OCI-LY7 (cell line): ENCODE measurements at regions of chr9 and their contacts with region 1.

Region 1: DNA sequence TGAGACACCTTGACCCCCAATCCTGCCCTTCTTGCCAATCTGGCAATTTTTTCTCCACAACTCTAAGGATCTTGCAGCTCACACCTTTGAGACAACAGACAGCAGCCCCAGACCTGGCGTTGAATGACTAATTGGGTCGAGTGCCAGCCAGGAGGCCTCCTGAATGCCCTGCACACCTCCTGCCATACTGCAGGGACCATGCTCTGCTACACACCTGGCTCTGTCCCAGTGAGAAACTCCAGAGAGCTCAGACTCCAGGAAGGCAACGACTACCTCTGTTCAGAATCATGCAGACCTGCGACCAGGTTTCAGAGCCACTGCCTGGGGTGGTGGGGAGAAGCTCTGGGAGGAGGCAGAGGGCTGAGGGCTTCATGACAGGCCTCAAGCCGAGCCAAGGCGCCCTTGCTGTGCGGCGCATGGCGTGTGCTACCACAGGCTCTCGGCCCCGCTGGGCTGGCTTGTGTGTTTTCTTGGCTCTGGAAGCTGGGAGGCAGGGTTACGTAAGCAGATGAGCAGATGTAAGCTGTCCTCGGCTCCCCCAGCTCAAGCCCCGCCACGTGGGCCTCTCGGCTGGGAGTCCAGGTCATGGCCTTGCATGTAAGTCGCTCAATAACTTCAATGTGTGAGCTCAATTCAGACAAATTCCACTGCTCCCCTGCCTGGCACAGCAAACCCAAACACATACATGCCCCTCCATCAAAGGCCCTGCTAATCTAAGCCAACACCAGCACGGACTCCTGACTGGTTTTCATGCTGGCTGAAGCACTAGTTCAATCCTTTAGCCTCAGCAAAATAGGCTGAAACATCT is 27.5 kb downstream of the B4GALT1 start:
- DNase-seq: no peak
- H3K4me3 ChIP-seq: no peak overlapping the region
- H3K27ac ChIP-seq: no peak overlapping the region
- H3K4me1 ChIP-seq: peaks cover 54% of the 10 kb centered on the region
- CTCF ChIP-seq: no peak

Region 2: DNA sequence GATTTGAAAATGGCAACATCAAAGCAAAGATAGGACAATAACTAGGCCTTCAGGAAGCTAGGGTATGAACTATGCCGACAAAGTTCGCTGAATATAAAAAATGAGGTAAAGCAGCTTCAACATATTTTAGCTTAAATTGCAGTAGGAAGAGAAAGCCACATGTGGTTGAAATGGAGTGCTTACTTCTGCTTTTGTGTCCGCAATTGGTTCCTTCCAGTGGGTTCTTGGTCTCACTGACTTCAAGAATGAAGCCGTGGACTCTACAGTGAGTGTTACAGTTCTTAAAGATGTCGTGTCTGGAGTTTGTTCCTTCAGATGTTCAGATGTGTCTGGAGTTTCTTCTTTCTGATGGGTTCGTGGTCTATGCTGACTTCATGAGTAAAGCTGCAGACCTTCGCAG is 233.4 kb before region 1 on chr9:
- CTCF ChIA-PET with region 1: no interaction called
- POLR2A ChIA-PET with region 1: no interaction called
- intact Hi-C with region 1: no loop called
- DNase-seq: no peak
- H3K4me3 ChIP-seq: no peak overlapping the region
- H3K27ac ChIP-seq: no peak overlapping the region
- H3K4me1 ChIP-seq: no peaks in the 10 kb centered on the region
- CTCF ChIP-seq: no peak

Region 3: GRCh38 chr9:33012328-33013069 is 127.1 kb before region 1 on chr9:
- CTCF ChIA-PET with region 1: no interaction called
- POLR2A ChIA-PET with region 1: no interaction called
- intact Hi-C with region 1: no loop called
- DNase-seq: no peak
- H3K4me3 ChIP-seq: no peak overlapping the region
- H3K27ac ChIP-seq: no peak overlapping the region
- H3K4me1 ChIP-seq: no peaks in the 10 kb centered on the region
- CTCF ChIP-seq: no peak

Region 4: GRCh38 chr9:33151007-33151557 is 11.5 kb after region 1 on chr9:
- CTCF ChIA-PET with region 1: interaction called, 6 read pairs
- POLR2A ChIA-PET with region 1: interaction called, 19 read pairs
- intact Hi-C with region 1: no loop called
- DNase-seq: no peak
- H3K4me3 ChIP-seq: no peak overlapping the region
- H3K27ac ChIP-seq: no peak overlapping the region
- H3K4me1 ChIP-seq: peaks cover 33% of the 10 kb centered on the region
- CTCF ChIP-seq: no peak

Region 5: GRCh38 chr9:33167046-33167808 is 27.6 kb after region 1 on chr9 and contains the start of gene B4GALT1:
- CTCF ChIA-PET with region 1: no interaction called
- POLR2A ChIA-PET with region 1: interaction called, 5 read pairs
- intact Hi-C with region 1: loop called (anchors 2 kb)
- DNase-seq: peak; percentile 95
- H3K4me3 ChIP-seq: peak within 1 kb of the TSS; percentile 93
- H3K27ac ChIP-seq: peak within 1 kb of the TSS; percentile 68
- H3K4me1 ChIP-seq: peaks cover 49% of the 10 kb centered on the region
- CTCF ChIP-seq: 0 out of 2 replicates have a peak, but pooled peaks have one; percentile 23
- total RNA-seq, gene B4GALT1: 8.1 and 12.8 TPM in 2 replicates